ENCODE measurements at regions of chr17 and their contacts with region 1.

Region 1: GRCh38 chr17:50161023-50161910 is 4.5 kb upstream of the SGCA start:
- DNase-seq: peak; percentile 89
- ATAC-seq: peak; percentile 95
- H3K4me3 Mint-ChIP-seq: peak overlapping the region; percentile 73
- H3K27ac Mint-ChIP-seq: peak overlapping the region; percentile 42
- H3K4me1 Mint-ChIP-seq: peaks cover 48% of the 10 kb centered on the region
- H3K27me3 Mint-ChIP-seq: no peaks in the 10 kb centered on the region
- CTCF ChIP-seq: peak; percentile 68

Region 2: GRCh38 chr17:50026901-50027630 is 134.2 kb before region 1 on chr17:
- CTCF ChIA-PET with region 1: no interaction called
- POLR2A ChIA-PET with region 1: no interaction called
- intact Hi-C with region 1: loop called (anchors 10 kb)
- DNase-seq: peak; percentile 72
- ATAC-seq: peak; percentile 82
- H3K4me3 Mint-ChIP-seq: peak overlapping the region; percentile 11
- H3K27ac Mint-ChIP-seq: no peak overlapping the region
- H3K4me1 Mint-ChIP-seq: peaks cover 9% of the 10 kb centered on the region
- H3K27me3 Mint-ChIP-seq: peaks cover 25% of the 10 kb centered on the region
- CTCF ChIP-seq: peak; percentile 86

Region 3: GRCh38 chr17:50129728-50130558 is 31.3 kb before region 1 on chr17 and contains the start of gene SAMD14:
- CTCF ChIA-PET with region 1: interaction called, 14 read pairs
- POLR2A ChIA-PET with region 1: interaction called, 6 read pairs
- intact Hi-C with region 1: no loop called
- DNase-seq: peak; percentile 52
- ATAC-seq: peak; percentile 61
- H3K4me3 Mint-ChIP-seq: peak within 1 kb of the TSS; percentile 80
- H3K27ac Mint-ChIP-seq: peak within 1 kb of the TSS; percentile 63
- H3K4me1 Mint-ChIP-seq: peaks cover 37% of the 10 kb centered on the region
- H3K27me3 Mint-ChIP-seq: peaks cover 8% of the 10 kb centered on the region
- CTCF ChIP-seq: no peak
- total RNA-seq, gene SAMD14: 4.7 and 4.9 TPM in 2 replicates

Region 4: DNA sequence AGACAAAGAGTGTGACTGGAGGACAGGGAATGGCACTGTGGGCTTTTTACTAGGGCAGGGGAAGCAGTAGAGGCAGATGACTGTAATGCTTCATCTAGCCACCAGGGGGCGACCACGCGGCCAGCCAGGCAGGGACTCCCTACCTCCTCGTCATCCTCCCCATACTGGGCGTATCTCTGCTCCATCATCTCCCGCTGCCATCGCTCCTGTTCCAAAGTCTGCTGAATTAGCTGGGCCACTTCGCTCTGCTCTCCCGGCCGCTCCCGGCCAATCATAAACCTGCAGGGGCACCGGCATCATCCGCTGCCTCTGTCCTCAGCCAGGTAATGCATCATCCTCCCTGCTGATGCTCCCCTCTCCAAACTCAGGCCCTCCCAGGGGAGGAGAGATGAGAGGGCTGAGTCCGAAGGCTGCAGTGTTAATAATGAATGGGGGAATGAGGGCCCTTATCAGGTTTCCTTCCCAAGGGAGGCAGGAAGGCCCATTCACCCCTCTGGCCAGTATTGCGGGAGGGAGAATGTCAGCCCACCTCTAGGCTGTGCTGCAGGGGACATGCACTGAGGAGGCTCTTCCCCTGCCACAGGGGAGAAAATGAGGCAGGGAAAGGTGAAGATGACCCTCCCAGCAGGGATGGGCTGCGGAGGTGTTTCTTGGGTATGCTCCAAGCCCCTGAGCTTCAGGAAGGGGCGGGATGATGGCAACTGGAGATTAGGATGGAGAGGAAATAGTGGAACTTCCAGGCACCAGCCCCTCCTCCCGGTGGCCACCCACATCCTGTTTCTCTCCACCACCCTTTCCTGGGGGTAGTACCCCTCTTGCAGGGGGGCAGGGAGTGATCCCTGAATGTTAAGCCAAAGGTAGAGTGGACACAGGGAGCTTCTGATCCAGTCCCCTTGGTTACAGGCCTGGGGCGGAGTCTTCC is 21.1 kb before region 1 on chr17:
- CTCF ChIA-PET with region 1: interaction called, 19 read pairs
- POLR2A ChIA-PET with region 1: interaction called, 18 read pairs
- intact Hi-C with region 1: loop called (anchors 1 kb)
- DNase-seq: peak; percentile 76
- ATAC-seq: peak; percentile 85
- H3K4me3 Mint-ChIP-seq: peak overlapping the region; percentile 41
- H3K27ac Mint-ChIP-seq: peak overlapping the region; percentile 70
- H3K4me1 Mint-ChIP-seq: peaks cover 63% of the 10 kb centered on the region
- H3K27me3 Mint-ChIP-seq: no peaks in the 10 kb centered on the region
- CTCF ChIP-seq: peak; percentile 43

Region 5: DNA sequence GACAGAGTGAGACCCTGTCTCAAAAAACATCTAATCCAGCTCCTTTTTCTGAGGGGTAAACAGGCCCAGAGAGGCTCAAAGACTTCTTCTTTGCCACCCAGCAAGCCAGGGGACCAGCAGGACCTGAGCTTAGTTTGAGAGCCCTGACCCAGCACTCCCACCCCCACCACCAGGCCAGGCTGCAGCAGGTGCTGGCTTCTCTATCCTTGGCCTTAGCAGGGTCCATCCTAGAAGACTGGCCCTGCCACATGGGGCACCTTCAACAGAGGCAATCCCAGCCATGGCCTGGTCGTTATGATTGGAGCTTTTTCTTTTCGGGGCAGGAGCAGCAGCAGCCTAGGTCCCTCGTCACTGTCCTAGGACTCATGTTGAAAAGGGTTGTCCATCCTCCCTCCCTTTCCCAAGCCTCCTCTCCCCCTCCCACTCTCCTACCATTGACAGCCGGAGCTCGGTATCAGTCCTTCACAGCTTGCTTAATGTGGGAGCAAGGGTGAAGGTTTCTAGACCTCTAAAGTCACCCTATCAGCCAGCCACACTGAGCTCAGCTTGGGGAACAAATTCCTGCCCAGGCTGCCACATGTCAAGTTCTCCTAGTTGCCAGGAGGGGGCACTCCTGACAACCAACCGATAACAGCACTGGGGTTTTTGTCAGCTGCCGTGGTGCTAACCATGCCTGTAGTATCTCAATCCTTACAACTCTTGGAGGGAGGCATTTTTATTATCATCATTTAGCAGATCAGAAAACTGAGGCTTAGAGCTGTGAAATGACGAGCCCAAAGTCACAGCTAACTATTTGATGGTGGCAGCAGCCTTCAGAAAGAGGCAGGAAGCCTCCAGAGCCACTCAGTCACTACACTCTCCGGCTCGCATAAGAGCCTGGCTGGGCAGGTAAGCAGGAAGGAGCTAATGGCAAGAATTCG is 200.6 kb after region 1 on chr17:
- CTCF ChIA-PET with region 1: no interaction called
- POLR2A ChIA-PET with region 1: no interaction called
- intact Hi-C with region 1: no loop called
- DNase-seq: no peak
- ATAC-seq: peak; percentile 97
- H3K4me3 Mint-ChIP-seq: no peak overlapping the region
- H3K27ac Mint-ChIP-seq: peak overlapping the region; percentile 70
- H3K4me1 Mint-ChIP-seq: peaks cover 7% of the 10 kb centered on the region
- H3K27me3 Mint-ChIP-seq: no peaks in the 10 kb centered on the region
- CTCF ChIP-seq: peak; percentile 30